ENCODE measurements at regions of chr17 and their contacts with region 1.

Region 1: DNA sequence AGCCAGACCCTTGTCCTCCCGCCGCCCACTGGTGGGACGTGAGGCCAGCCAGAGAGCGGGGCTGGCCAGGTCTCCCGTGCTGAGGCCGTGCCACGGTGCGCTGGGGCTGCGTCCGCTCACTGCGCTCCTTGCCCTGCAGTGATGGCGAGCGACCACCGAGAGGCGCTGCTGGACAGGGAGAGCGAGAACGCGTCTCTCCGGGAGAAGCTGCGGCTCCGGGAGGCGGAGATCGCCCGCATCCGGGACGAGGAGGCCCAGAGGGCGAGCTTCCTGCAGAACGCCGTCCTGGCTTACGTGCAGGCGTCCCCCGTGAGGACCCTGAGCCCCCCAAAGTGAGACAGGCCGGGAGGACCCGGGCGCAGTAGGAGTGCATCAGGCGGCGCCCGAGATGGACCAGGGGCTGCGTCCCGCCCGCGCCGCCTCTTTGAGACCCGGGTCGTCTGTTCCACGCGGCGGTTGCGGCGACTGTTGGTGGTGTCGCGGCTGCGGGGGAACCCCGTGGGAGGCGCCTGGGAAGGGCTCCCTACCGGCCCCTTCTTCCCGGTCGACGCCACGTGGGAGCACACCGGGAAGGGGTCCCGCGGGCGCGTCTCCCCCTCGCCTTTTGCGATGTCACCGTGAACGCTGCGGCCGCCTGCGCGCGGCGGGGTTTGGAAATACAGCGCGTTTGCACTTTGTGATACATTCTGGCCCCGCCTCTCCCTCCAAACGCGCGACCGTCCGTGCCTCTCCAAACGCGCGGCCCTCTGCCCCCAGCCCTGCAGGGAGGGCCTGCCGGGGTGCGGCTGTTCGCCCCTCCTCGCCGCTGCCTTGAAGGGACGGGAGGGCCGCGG is 792 bp upstream of the RAC3 start:
- DNase-seq: peak; percentile 91
- ATAC-seq: peak; percentile 50
- H3K4me3 Mint-ChIP-seq: peak overlapping the region; percentile 73
- H3K27ac Mint-ChIP-seq: no peak overlapping the region
- H3K4me1 Mint-ChIP-seq: peaks cover 14% of the 10 kb centered on the region
- H3K27me3 Mint-ChIP-seq: no peaks in the 10 kb centered on the region
- CTCF ChIP-seq: peak; percentile 85

Region 2: DNA sequence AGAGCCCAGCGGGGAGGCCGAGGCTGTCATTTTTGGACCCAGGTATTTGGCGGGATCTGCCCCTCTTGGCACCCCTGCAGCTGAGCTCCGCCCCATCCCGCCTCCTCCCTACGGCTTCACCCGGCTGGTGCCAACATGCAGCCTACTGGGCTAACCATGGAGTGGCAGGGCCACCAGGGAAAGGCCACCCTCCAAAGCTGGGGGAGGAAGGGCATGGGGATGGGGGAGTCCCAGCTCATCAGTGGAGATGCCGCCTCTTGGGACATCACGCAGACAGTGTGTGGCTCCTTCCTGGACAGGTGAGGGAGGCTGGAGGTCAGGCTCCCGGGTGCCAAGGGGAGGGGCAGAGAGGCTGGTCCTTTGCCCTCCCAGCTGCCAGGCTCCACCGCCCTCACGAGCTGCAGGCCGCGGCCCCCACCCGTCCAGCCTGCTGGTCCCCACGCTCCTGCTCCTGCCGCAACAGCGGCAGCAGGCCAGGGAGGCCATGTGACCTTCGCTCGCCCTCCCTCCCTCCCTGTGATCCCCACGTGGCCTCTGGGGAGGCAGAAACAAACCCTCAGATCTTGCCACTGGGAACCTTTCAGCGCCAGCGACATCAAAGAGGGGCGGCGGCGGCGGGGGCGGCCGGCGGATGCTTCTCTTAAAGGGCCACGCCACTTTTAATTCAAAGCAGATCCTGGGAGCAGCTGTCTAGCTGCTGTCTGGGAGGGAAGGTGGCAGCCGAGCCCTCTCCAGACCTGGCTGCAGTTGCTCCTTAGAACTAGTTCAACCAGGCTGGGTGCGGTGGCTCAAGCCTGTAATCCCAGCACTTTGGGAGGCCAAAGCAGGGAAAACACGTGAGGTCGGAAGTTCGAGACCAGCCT is 62.9 kb before region 1 on chr17:
- CTCF ChIA-PET with region 1: interaction called, 11 read pairs
- POLR2A ChIA-PET with region 1: no interaction called
- DNase-seq: peak; percentile 78
- ATAC-seq: peak; percentile 57
- H3K4me3 Mint-ChIP-seq: peak overlapping the region; percentile 42
- H3K27ac Mint-ChIP-seq: no peak overlapping the region
- H3K4me1 Mint-ChIP-seq: peaks cover 11% of the 10 kb centered on the region
- H3K27me3 Mint-ChIP-seq: peaks cover 68% of the 10 kb centered on the region
- CTCF ChIP-seq: no peak

Region 3: GRCh38 chr17:82051776-82052637 is 21.3 kb after region 1 on chr17 and contains the starts of genes GPS1 and RFNG:
- CTCF ChIA-PET with region 1: interaction called, 31 read pairs
- POLR2A ChIA-PET with region 1: no interaction called
- DNase-seq: peak; percentile 71
- ATAC-seq: peak; percentile 63
- H3K4me3 Mint-ChIP-seq: peak within 1 kb of the TSS; percentile 89
- H3K27ac Mint-ChIP-seq: peak within 1 kb of the TSS; percentile 79
- H3K4me1 Mint-ChIP-seq: peaks cover 4% of the 10 kb centered on the region
- H3K27me3 Mint-ChIP-seq: no peaks in the 10 kb centered on the region
- CTCF ChIP-seq: no peak
- total RNA-seq, gene GPS1: 166 to 181 TPM (median 167 TPM) in 3 replicates
- total RNA-seq, gene RFNG: 40.9 to 42.3 TPM (median 41.6 TPM) in 3 replicates

Region 4: GRCh38 chr17:82098072-82098821 is 67.6 kb after region 1 on chr17 and contains the start of gene FASN:
- CTCF ChIA-PET with region 1: interaction called, 18 read pairs
- POLR2A ChIA-PET with region 1: no interaction called
- DNase-seq: peak; percentile 92
- ATAC-seq: peak; percentile 75
- H3K4me3 Mint-ChIP-seq: peak within 1 kb of the TSS; percentile 69
- H3K27ac Mint-ChIP-seq: no peak within 1 kb of the TSS
- H3K4me1 Mint-ChIP-seq: peaks cover 28% of the 10 kb centered on the region
- H3K27me3 Mint-ChIP-seq: no peaks in the 10 kb centered on the region
- CTCF ChIP-seq: no peak
- total RNA-seq, gene FASN: 611 to 742 TPM (median 654 TPM) in 3 replicates

Region 5: DNA sequence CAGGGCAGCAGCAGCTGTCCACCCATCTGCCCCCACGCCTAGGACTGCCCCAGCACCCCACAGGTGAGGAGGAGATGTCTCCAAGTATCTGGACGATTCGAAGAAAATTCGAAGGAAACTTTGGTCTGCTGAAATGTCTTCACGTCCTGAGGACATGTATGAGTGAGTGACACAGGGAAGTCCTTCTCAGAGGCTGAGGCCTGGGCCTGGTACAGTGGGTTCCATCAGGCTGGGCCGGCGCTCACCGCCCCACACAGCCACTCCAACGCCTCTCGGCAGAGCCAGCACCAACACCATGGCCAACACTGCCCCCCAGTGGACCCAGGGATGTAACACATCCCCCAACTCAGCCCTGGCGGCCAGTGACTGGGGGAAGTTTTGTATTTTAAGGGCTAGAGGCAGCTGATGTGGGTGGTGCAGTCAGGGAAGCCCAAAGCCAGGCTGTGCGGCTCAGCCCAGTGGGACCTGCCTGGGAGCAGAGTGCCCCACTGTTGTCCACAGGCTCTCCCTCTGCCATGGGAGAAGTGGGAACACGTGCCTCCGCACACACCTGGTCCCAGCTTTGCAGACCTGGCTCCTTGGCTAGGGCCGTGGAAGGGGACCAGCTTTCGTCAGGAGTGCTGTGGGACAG is 123.2 kb after region 1 on chr17:
- CTCF ChIA-PET with region 1: interaction called, 36 read pairs
- POLR2A ChIA-PET with region 1: no interaction called
- DNase-seq: peak; percentile 89
- ATAC-seq: peak; percentile 95
- H3K4me3 Mint-ChIP-seq: no peak overlapping the region
- H3K27ac Mint-ChIP-seq: peak overlapping the region; percentile 36; the same call in 1 of the 2 replicates
- H3K4me1 Mint-ChIP-seq: 0 out of 2 replicates have a peak, but pooled peaks cover 3% of the 10 kb centered on the region
- H3K27me3 Mint-ChIP-seq: no peaks in the 10 kb centered on the region; the same call in 1 of the 2 replicates
- CTCF ChIP-seq: peak; percentile 84

Region 6: DNA sequence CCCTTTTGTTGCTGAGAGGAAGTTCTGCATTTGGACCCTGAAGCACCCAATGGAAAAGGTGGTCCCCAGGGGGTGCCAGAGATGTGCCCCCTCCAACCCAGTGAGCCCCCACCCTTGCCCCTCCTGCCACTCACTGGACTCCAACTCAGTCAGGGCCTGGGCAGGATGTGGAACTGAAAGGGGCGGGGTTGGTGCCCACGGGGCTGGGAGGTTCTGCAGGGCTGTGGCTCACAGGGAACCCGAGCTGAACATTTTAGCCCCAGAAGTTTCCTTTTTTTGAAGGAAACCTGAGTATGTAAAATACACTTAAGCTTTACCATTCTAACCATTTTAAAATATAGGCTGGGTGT is 403.5 kb after region 1 on chr17:
- CTCF ChIA-PET with region 1: no interaction called
- POLR2A ChIA-PET with region 1: no interaction called
- DNase-seq: no peak
- ATAC-seq: no peak
- H3K4me3 Mint-ChIP-seq: no peak overlapping the region
- H3K27ac Mint-ChIP-seq: no peak overlapping the region
- H3K4me1 Mint-ChIP-seq: no peaks in the 10 kb centered on the region
- H3K27me3 Mint-ChIP-seq: no peaks in the 10 kb centered on the region
- CTCF ChIP-seq: no peak